ENCODE measurements at regions of chr17 and their contacts with region 1.

Region 1: DNA sequence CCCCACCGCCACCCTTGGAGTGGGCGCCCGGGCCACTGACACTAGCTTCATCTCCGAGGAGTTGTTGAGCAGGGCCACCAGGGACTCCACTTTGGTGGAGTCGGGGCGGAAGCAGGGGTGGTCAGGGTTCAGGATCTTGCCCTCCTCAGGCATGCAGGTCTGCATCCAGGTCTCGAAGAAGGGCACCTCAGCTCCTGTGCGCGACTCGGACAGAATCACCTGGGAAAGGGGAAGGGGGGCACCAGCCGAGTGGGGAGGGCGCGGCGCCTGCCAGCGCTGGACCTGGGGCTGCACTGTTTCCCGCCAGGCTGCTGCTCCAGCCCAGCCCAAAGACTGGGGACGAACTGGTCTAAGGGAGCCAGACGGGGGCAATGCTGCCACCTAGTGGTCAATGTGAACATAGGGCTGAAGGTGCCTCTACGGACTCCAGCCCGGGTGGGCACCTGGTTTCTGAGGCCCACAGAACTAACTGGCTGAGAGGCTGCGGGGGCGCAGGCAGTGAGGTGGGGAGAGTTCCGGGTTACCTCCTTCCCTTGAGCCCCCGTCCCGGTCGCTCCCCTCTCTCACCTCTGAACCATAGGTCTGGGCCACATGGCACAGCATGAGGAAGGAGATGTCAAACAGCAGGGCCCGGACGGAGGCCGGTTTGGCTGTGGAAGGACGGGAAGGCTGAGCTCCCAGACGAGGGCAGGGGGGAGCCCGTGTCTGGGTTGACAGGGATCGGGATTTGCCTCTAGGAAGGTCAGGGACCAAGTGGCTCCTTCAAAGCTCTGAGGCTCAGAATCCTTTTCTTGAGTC is 11.8 kb downstream of the CSF3 start:
- DNase-seq: peak; percentile 67 to 78 (median 69)
- H3K4me3 ChIP-seq: no peak overlapping the region
- H3K4me3 Mint-ChIP-seq: peak overlapping the region in 3 of 8 donors; percentile 46 to 75 (median 56)
- H3K27ac ChIP-seq: no peak overlapping the region
- H3K27ac Mint-ChIP-seq: peak overlapping the region in 4 of 7 donors; percentile 15 to 52 (median 32)
- H3K4me1 ChIP-seq: peaks cover 25% of the 10 kb centered on the region
- H3K4me1 Mint-ChIP-seq: peaks cover 19 to 24% (median 21%) of the 10 kb centered on the region in 4 donors
- H3K27me3 ChIP-seq: no peaks in the 10 kb centered on the region
- H3K27me3 Mint-ChIP-seq: no peaks in the 10 kb centered on the region

Region 2: GRCh38 chr17:39110435-39111136 is 916.4 kb before region 1 on chr17:
- CTCF ChIA-PET with region 1: no interaction called
- POLR2A ChIA-PET with region 1: no interaction called
- intact Hi-C with region 1: no loop called
- DNase-seq: no peak
- H3K4me3 ChIP-seq: no peak overlapping the region
- H3K4me3 Mint-ChIP-seq: no peak overlapping the region
- H3K27ac ChIP-seq: no peak overlapping the region
- H3K27ac Mint-ChIP-seq: peak overlapping the region in 3 of 7 donors; percentile 55 to 80 (median 70)
- H3K4me1 ChIP-seq: no peaks in the 10 kb centered on the region
- H3K4me1 Mint-ChIP-seq: peaks cover 0 to 2% (median 0%) of the 10 kb centered on the region in 4 donors
- H3K27me3 ChIP-seq: no peaks in the 10 kb centered on the region
- H3K27me3 Mint-ChIP-seq: no peaks in the 10 kb centered on the region

Region 3: DNA sequence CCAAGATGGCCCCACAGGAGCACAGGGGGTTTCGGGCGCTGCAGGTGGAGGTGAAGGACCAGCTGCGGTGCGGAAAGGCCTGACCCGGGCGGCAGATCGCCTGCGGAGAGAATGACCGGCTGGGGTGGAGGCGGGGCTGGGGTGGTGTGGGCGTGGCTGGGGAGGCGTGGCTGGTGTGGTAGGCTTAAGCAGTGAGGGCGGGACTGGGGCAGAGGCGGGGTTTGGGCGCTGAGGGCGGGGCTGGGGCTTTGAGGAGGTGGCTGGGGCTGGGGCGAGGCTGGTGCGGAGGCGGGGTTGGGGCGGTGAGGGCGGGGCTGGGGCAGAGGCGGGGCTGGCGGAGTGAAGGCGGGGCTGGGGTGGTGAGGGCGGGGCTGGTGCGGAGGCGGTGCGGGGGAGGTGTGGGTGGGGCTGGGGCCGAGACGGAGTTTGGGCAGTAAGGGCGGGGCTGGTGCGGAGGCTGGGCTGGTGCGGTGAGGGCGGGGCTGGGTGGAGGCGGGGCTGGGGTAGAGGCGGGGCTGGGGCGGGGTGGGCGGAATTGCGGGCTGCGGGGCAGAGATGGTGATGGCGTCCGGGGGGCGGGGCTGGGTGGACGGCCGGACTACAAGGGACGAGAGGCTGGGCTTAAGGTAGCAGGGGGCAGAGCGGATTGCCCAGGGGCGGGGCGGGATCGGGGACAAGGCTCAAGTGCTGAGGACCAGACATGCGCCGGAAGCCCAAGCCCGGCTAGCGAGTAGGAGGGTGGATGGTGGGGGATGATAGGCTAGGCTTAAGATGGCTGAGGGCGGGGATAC is 74.1 kb before region 1 on chr17:
- CTCF ChIA-PET with region 1: no interaction called
- POLR2A ChIA-PET with region 1: no interaction called
- intact Hi-C with region 1: loop called (anchors 2 kb)
- DNase-seq: peak; percentile 90 to 99 (median 90)
- H3K4me3 ChIP-seq: peak overlapping the region; percentile 61 to 78
- H3K4me3 Mint-ChIP-seq: peak overlapping the region; percentile 79 to 90 (median 86)
- H3K27ac ChIP-seq: peak overlapping the region; percentile 34
- H3K27ac Mint-ChIP-seq: peak overlapping the region; percentile 71 to 94 (median 89)
- H3K4me1 ChIP-seq: peaks cover 12% of the 10 kb centered on the region
- H3K4me1 Mint-ChIP-seq: peaks cover 6 to 23% (median 9%) of the 10 kb centered on the region in 4 donors
- H3K27me3 ChIP-seq: no peaks in the 10 kb centered on the region
- H3K27me3 Mint-ChIP-seq: no peaks in the 10 kb centered on the region

Region 4: GRCh38 chr17:40038882-40039513 is 12.0 kb after region 1 on chr17:
- CTCF ChIA-PET with region 1: interaction called, 13 read pairs
- POLR2A ChIA-PET with region 1: no interaction called
- intact Hi-C with region 1: no loop called
- DNase-seq: no peak
- H3K4me3 ChIP-seq: no peak overlapping the region
- H3K4me3 Mint-ChIP-seq: no peak overlapping the region
- H3K27ac ChIP-seq: no peak overlapping the region
- H3K27ac Mint-ChIP-seq: peak overlapping the region in 2 of 7 donors; percentile 18 to 87
- H3K4me1 ChIP-seq: no peaks in the 10 kb centered on the region
- H3K4me1 Mint-ChIP-seq: peaks cover 0 to 6% (median 2%) of the 10 kb centered on the region in 4 donors
- H3K27me3 ChIP-seq: no peaks in the 10 kb centered on the region
- H3K27me3 Mint-ChIP-seq: no peaks in the 10 kb centered on the region

Region 5: DNA sequence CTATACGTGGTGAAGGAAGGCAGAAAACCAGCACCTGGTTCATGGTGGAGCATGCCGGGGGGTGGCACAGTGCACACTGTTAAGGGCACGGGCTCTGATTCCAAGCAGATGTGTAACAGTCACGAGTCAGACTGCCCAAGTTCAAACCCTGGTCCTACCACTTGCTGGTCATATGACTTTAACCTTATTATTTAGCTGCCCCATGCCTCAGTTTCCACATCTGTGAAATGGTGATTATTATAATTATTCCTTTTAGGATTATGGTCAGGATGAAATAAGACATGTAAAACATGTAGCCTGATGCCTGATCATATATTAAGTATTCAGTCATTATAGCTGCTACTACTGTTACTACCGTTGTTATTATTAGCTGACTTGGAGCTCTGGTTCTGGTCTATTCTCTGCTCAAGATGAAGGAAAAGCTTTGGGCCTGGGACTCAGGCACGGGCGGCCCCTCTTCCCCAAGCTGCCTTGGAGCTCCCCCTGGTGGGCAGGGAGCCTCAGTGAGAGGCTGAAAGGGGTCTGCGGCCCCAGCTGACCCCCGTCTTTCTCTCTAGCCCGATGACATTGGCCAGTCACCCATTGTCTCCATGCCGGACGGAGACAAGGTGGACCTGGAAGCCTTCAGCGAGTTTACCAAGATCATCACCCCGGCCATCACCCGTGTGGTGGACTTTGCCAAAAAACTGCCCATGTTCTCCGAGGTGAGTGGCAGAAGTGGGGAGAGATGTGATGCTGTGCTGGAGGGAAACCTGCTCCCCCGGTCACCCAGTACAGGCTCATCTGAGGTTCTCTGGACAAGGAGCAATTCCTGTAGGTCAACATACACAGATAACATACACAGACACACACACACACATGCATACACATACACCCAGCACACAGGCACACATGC is 59.4 kb after region 1 on chr17:
- CTCF ChIA-PET with region 1: interaction called, 15 read pairs
- POLR2A ChIA-PET with region 1: interaction called, 4 read pairs
- intact Hi-C with region 1: no loop called
- DNase-seq: peak in 3 of 5 donors; percentile 40 to 52 (median 50)
- H3K4me3 ChIP-seq: no peak overlapping the region
- H3K4me3 Mint-ChIP-seq: no peak overlapping the region
- H3K27ac ChIP-seq: no peak overlapping the region
- H3K27ac Mint-ChIP-seq: peak overlapping the region in 4 of 7 donors; percentile 1 to 77 (median 60)
- H3K4me1 ChIP-seq: peaks cover 5% of the 10 kb centered on the region
- H3K4me1 Mint-ChIP-seq: peaks cover 6 to 23% (median 10%) of the 10 kb centered on the region in 4 donors
- H3K27me3 ChIP-seq: no peaks in the 10 kb centered on the region
- H3K27me3 Mint-ChIP-seq: no peaks in the 10 kb centered on the region

Region 6: GRCh38 chr17:40130352-40131042 is 103.5 kb after region 1 on chr17:
- CTCF ChIA-PET with region 1: no interaction called
- POLR2A ChIA-PET with region 1: no interaction called
- intact Hi-C with region 1: no loop called
- DNase-seq: no peak
- H3K4me3 ChIP-seq: no peak overlapping the region
- H3K4me3 Mint-ChIP-seq: no peak overlapping the region
- H3K27ac ChIP-seq: no peak overlapping the region
- H3K27ac Mint-ChIP-seq: peak overlapping the region; percentile 38 to 89 (median 57)
- H3K4me1 ChIP-seq: peaks cover 2% of the 10 kb centered on the region
- H3K4me1 Mint-ChIP-seq: peaks cover 7 to 17% (median 11%) of the 10 kb centered on the region in 4 donors
- H3K27me3 ChIP-seq: no peaks in the 10 kb centered on the region
- H3K27me3 Mint-ChIP-seq: no peaks in the 10 kb centered on the region

Measured in CD4-positive, alpha-beta memory T cell (primary cell).